Activated naive CD4-positive, alpha-beta T cell treated with anti-CD3 and anti-CD28 coated beads for 36 hours (primary cell): ENCODE measurements at regions of chr2 and their contacts with region 1.

Region 1: GRCh38 chr2:207166039-207166348 is 246 bp upstream of the KLF7 start:
- DNase-seq: peak; percentile 98
- H3K4me3 Mint-ChIP-seq: peak overlapping the region; percentile 95
- H3K27ac Mint-ChIP-seq: peak overlapping the region; percentile 96
- H3K4me1 Mint-ChIP-seq: peaks cover 43% of the 10 kb centered on the region
- H3K27me3 Mint-ChIP-seq: no peaks in the 10 kb centered on the region

Region 2: GRCh38 chr2:206800506-206801417 is 365.2 kb before region 1 on chr2:
- CTCF ChIA-PET with region 1: interaction called, 3 read pairs
- intact Hi-C with region 1: loop called (anchors 2 kb)
- DNase-seq: peak; percentile 70
- H3K4me3 Mint-ChIP-seq: no peak overlapping the region
- H3K27ac Mint-ChIP-seq: no peak overlapping the region
- H3K4me1 Mint-ChIP-seq: peaks cover 31% of the 10 kb centered on the region
- H3K27me3 Mint-ChIP-seq: no peaks in the 10 kb centered on the region

Region 3: DNA sequence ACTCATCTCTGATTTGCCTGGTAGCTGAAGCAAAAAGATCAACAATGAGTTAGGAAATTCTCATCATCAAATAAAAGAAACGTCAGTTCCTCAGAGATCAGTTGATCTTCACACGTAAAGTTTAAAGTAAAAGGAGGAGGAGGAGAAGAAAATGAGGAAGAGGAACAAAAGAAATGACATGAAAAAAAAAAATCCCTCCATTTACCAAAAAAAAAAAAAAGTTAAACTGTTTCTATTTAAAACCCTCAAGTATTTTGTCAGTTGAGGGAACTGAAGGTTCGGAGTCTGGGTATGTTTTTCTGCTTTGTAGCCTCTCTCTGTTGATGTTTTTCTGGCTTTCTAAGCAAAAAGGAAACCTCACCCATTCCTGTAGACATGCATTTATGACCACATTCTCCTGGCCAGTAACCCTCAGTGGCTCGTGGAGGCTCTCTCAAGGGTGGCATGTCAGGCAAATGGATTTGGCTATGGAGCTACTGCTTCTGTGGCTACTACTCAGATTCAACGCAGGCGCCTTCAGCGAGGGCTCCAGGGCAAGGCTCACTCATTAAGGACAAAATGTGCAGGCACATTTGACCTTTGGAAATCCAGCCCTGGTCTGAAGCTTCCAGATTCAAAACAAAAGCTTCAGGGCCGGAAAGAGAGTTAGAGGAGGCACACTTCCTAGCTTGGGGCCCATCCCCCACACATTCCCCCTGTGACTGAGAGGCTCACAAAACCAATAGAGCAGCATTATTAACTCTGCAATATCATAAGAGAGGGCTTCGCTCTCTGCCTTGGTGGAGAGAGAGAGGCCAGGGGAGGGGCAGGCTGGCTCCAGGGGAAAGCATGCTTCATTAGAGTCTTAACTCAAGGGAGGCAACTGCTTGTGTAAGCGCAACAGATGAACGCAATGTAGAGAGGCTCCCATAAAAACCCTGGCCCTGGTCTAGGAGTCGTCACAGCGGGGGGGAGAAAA is 22.5 kb before region 1 on chr2:
- CTCF ChIA-PET with region 1: interaction called, 11 read pairs
- intact Hi-C with region 1: loop called (anchors 1 kb)
- DNase-seq: peak; percentile 78
- H3K4me3 Mint-ChIP-seq: peak overlapping the region; percentile 64
- H3K27ac Mint-ChIP-seq: peak overlapping the region; percentile 92
- H3K4me1 Mint-ChIP-seq: peaks cover 68% of the 10 kb centered on the region
- H3K27me3 Mint-ChIP-seq: no peaks in the 10 kb centered on the region

Region 4: GRCh38 chr2:207238831-207239701 is 73.1 kb after region 1 on chr2:
- CTCF ChIA-PET with region 1: interaction called, 5 read pairs
- intact Hi-C with region 1: loop called (anchors 1 kb)
- DNase-seq: peak; percentile 73
- H3K4me3 Mint-ChIP-seq: no peak overlapping the region
- H3K27ac Mint-ChIP-seq: peak overlapping the region; percentile 2
- H3K4me1 Mint-ChIP-seq: peaks cover 30% of the 10 kb centered on the region
- H3K27me3 Mint-ChIP-seq: no peaks in the 10 kb centered on the region

Region 5: DNA sequence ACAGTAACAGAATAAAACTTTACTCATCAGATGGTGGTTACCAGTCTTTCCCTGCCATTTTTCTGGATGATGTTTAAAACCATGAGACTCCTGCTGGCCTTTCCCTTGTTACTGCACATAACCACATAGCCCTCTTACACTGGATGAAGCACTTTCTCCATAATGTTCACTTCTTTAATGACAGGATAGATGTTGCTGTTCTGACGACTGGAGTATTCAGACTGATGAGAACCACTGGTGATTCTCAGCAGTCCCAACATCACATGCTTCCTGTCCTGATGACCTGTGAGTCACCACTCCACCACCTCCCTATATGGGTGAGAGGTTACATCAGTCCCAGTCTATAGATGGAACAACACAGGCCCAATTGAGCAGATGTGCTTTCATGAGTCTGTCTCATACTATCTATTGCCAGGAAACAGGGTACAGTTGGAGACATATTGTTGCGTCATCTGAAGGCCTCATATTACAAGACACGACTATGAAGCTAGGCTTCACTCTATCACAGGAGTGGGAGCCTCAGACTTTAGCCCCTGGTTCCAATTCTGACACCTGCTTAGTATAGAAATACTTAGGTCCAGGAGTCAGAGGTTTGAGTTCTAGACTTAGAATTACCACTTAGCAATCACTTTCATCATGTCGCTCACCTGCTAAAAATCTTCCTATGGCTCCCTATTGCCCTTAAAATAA is 145.5 kb after region 1 on chr2:
- CTCF ChIA-PET with region 1: interaction called, 3 read pairs
- intact Hi-C with region 1: loop called (anchors 1 kb)
- DNase-seq: peak; percentile 78
- H3K4me3 Mint-ChIP-seq: peak overlapping the region; percentile 13
- H3K27ac Mint-ChIP-seq: peak overlapping the region; percentile 78
- H3K4me1 Mint-ChIP-seq: peaks cover 22% of the 10 kb centered on the region
- H3K27me3 Mint-ChIP-seq: peaks cover 4% of the 10 kb centered on the region

Region 6: GRCh38 chr2:207473049-207473930 is 307.3 kb after region 1 on chr2:
- CTCF ChIA-PET with region 1: interaction called, 6 read pairs
- intact Hi-C with region 1: loop called (anchors 2 kb)
- DNase-seq: peak; percentile 79
- H3K4me3 Mint-ChIP-seq: no peak overlapping the region
- H3K27ac Mint-ChIP-seq: no peak overlapping the region
- H3K4me1 Mint-ChIP-seq: peaks cover 18% of the 10 kb centered on the region
- H3K27me3 Mint-ChIP-seq: no peaks in the 10 kb centered on the region

Region 7: DNA sequence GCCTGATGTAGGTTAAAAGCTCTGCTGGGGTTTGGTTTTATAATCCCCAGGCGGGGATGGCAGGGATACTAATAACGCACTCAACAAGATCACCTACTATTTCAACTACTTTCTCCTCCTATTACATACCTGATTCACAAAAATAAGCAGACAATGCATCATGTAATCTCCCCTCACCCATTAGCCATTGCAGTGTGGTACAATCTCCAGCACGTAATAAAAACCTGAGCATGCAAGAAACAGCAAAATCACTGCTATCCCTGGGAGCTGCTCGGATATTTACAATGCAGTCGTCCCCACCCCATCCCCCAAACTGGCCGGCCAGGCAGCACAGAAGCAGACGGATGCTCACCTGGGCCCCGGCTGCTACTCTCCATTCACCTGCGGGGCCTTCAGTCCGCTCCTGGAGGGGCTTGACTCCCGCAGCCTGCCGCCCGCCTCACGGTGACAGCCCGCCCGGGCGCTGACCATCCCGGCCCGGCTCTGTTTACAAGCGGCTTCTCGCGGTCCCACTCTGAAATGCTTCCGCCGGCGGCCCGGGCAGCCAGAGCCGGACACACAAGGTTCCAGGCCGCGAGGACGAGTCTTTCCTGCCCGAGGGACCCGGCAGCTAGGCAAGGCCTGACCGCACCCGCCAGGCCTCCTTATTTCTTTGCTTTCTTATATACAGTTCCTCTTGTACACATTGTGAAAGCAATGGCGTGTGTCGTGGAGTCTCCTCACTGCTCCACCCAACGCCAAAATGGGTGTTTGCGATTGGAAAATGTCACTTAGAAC is 859.2 kb after region 1 on chr2 and contains the start of gene PLEKHM3:
- CTCF ChIA-PET with region 1: no interaction called
- intact Hi-C with region 1: loop called (anchors 10 kb)
- DNase-seq: peak; percentile 81
- H3K4me3 Mint-ChIP-seq: peak within 1 kb of the TSS; percentile 93
- H3K27ac Mint-ChIP-seq: peak within 1 kb of the TSS; percentile 88
- H3K4me1 Mint-ChIP-seq: peaks cover 14% of the 10 kb centered on the region
- H3K27me3 Mint-ChIP-seq: no peaks in the 10 kb centered on the region
- total RNA-seq, gene PLEKHM3: 6.5 to 7.0 TPM